A673 (cell line): ENCODE measurements at regions of chr16 and their contacts with region 1.

Region 1: DNA sequence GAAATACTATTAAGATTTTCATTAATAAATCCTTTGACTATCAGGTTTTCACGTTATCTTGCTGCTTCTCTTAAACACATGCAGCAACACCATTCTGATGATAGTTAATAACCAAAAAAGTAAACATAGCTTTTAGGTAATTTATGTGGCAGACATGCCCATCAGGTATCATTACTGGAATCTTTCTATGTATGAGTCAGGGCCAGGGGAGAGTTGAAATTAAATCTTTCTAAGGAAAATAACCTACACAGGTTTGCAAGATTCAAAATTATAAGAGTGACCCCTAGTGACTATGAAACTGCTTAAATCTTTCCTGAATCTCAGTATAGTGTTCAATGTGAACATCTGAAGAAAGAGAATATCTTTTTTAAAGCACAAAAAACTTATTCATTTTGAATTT is 666.6 kb downstream of the CDH11 start:
- DNase-seq: no peak
- H3K4me3 ChIP-seq: no peak overlapping the region
- H3K27ac ChIP-seq: no peak overlapping the region
- H3K4me1 ChIP-seq: no peaks in the 10 kb centered on the region
- H3K27me3 ChIP-seq: no peaks in the 10 kb centered on the region
- CTCF ChIP-seq: peak; percentile 39; the same call in 1 of the 2 replicates

Region 2: GRCh38 chr16:64089697-64090096 is 365.6 kb before region 1 on chr16:
- CTCF ChIA-PET with region 1: no interaction called
- POLR2A ChIA-PET with region 1: no interaction called
- intact Hi-C with region 1: loop called (anchors 10 kb)
- DNase-seq: peak; percentile 59
- H3K4me3 ChIP-seq: no peak overlapping the region
- H3K27ac ChIP-seq: no peak overlapping the region
- H3K4me1 ChIP-seq: no peaks in the 10 kb centered on the region
- H3K27me3 ChIP-seq: no peaks in the 10 kb centered on the region
- CTCF ChIP-seq: peak; percentile 73

Region 3: DNA sequence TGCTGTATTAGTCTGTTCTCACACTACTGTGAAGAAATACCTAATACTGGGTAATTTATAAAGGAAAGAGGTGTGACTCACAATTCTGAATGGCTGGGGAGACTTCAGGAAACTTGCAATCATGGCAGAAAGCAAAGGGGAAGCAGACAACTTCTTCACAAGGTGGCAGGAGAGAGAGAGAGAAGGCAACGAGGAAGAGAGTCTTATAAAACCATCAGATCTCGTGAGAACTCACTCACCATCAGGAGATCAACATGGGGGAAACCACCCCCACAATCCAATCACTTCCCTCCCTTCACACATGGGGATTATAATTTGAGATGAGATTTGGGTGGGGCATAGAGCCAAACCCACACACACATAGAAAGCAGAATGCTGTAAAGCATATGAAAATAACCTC is 229.6 kb before region 1 on chr16:
- CTCF ChIA-PET with region 1: no interaction called
- POLR2A ChIA-PET with region 1: no interaction called
- intact Hi-C with region 1: loop called (anchors 10 kb)
- DNase-seq: no peak
- H3K4me3 ChIP-seq: no peak overlapping the region
- H3K27ac ChIP-seq: no peak overlapping the region
- H3K4me1 ChIP-seq: no peaks in the 10 kb centered on the region
- H3K27me3 ChIP-seq: no peaks in the 10 kb centered on the region
- CTCF ChIP-seq: no peak

Region 4: GRCh38 chr16:64362193-64362592 is 93.1 kb before region 1 on chr16:
- CTCF ChIA-PET with region 1: no interaction called
- POLR2A ChIA-PET with region 1: no interaction called
- intact Hi-C with region 1: loop called (anchors 10 kb)
- DNase-seq: no peak
- H3K4me3 ChIP-seq: no peak overlapping the region
- H3K27ac ChIP-seq: no peak overlapping the region
- H3K4me1 ChIP-seq: peaks cover 7% of the 10 kb centered on the region
- H3K27me3 ChIP-seq: no peaks in the 10 kb centered on the region
- CTCF ChIP-seq: no peak

Region 5: DNA sequence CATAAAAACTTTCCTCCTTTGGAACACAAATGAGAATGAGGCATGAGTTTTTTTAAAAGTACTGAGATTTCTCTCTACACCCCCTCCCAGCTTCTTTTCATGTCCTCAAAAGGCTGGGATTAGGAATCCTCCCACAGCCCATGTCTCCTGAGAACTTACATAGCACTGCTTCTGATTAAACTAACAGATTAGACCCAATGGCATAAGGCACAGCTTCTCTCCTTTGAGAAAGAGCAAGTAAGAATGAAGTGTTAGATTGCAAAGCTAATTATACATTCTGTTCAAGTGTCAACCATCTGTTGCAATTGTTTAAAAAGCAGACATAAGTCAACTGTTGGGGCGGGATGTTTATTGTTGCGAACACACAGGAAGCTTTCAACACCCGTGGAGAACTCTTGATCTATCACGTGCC is 48.5 kb before region 1 on chr16:
- CTCF ChIA-PET with region 1: no interaction called
- POLR2A ChIA-PET with region 1: no interaction called
- intact Hi-C with region 1: loop called (anchors 10 kb)
- DNase-seq: peak; percentile 35
- H3K4me3 ChIP-seq: no peak overlapping the region
- H3K27ac ChIP-seq: no peak overlapping the region
- H3K4me1 ChIP-seq: peaks cover 4% of the 10 kb centered on the region
- H3K27me3 ChIP-seq: no peaks in the 10 kb centered on the region
- CTCF ChIP-seq: no peak